ENCODE measurements at regions of chr12 and their contacts with region 1.

Region 1: DNA sequence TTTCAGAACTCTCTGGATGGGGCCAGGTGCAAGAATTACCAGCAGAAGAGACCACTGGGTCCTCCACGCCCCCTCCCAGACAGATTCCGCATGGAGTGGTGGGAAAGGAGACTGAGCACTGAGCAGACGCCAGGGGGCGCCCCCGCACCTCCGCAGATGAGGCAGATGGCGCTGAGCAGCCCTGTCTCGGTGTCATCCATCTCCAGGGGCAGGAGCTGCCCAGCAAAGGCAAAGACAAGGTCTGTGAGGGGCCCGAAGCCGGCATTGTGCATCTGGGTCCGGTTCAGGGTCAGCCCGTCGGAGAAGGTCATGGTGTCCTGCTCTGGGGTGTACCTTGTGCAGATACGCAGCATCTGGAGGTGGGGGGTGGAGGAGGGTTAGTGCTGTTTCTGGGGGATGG is 6.3 kb upstream of the ITGB7 start:
- DNase-seq: peak; percentile 84
- H3K4me3 Mint-ChIP-seq: no peak overlapping the region
- H3K27ac Mint-ChIP-seq: peak overlapping the region; percentile 37
- H3K4me1 Mint-ChIP-seq: peaks cover 93% of the 10 kb centered on the region
- H3K27me3 Mint-ChIP-seq: no peaks in the 10 kb centered on the region

Region 2: GRCh38 chr12:53115112-53115890 is 98.0 kb before region 1 on chr12:
- CTCF ChIA-PET with region 1: no interaction called
- POLR2A ChIA-PET with region 1: no interaction called
- DNase-seq: no peak
- H3K4me3 Mint-ChIP-seq: no peak overlapping the region
- H3K27ac Mint-ChIP-seq: no peak overlapping the region
- H3K4me1 Mint-ChIP-seq: no peaks in the 10 kb centered on the region
- H3K27me3 Mint-ChIP-seq: peaks cover 2% of the 10 kb centered on the region

Region 3: GRCh38 chr12:53180220-53180930 is 33.0 kb before region 1 on chr12 and contains the starts of genes CSAD and ZNF740:
- CTCF ChIA-PET with region 1: interaction called, 71 read pairs
- POLR2A ChIA-PET with region 1: no interaction called
- DNase-seq: peak; percentile 98
- H3K4me3 Mint-ChIP-seq: peak within 1 kb of the TSS; percentile 84
- H3K27ac Mint-ChIP-seq: peak within 1 kb of the TSS; percentile 95
- H3K4me1 Mint-ChIP-seq: peaks cover 60% of the 10 kb centered on the region
- H3K27me3 Mint-ChIP-seq: no peaks in the 10 kb centered on the region
- total RNA-seq, gene CSAD: 33.3 to 34.7 TPM
- total RNA-seq, gene ZNF740: 38.9 to 44.1 TPM

Region 4: GRCh38 chr12:53200458-53201176 is 12.7 kb before region 1 on chr12:
- CTCF ChIA-PET with region 1: interaction called, 27 read pairs
- POLR2A ChIA-PET with region 1: no interaction called
- DNase-seq: peak; percentile 51
- H3K4me3 Mint-ChIP-seq: peak overlapping the region; percentile 70
- H3K27ac Mint-ChIP-seq: peak overlapping the region; percentile 90
- H3K4me1 Mint-ChIP-seq: peaks cover 82% of the 10 kb centered on the region
- H3K27me3 Mint-ChIP-seq: no peaks in the 10 kb centered on the region

Region 5: DNA sequence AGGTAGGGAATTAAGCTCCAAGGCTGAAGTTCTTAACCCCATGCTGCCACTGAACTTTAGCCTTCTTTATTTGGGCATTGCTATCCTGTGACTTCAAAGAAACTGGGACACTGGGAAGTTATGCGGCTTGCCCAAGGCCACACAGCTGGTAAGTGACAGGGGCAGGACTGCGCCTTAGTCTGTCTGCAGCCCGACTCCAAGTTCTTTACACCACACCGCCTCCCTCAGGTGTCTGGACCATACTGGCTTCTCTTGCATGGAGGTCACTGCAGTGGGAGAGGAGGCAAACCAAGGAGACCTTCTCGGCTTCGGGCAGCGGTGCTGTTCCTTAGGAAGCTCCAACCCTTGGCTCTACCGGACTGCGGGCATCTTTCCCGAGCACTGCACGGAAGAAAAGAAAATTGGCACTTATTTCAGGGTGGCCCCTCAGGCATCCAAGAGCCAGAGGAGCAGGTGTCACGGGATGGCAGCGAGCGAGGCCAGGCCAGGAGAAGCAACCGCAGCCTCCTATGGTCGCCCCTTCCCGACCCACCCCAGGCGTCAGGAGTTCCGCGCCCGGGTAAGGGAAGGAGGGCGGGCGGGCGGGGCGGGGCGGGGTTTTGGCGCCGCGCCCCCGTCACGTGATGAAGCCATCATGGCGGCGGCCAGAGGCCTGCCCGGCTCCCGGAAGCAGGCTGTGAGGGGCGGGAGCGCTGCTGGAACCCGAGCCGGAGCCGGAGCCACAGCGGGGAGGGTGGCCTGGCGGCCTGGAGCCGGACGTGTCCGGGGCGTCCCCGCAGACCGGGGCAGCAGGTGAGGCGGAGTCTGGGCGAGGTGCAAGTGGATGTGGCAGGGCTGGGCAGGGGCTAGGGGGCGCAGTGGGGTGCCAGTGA is 38.4 kb after region 1 on chr12:
- CTCF ChIA-PET with region 1: interaction called, 22 read pairs
- POLR2A ChIA-PET with region 1: no interaction called
- DNase-seq: peak; percentile 73
- H3K4me3 Mint-ChIP-seq: peak overlapping the region; percentile 99
- H3K27ac Mint-ChIP-seq: peak overlapping the region; percentile 94
- H3K4me1 Mint-ChIP-seq: peaks cover 47% of the 10 kb centered on the region
- H3K27me3 Mint-ChIP-seq: no peaks in the 10 kb centered on the region

Region 6: GRCh38 chr12:53287741-53288216 is 74.4 kb after region 1 on chr12:
- CTCF ChIA-PET with region 1: interaction called, 10 read pairs
- POLR2A ChIA-PET with region 1: no interaction called
- DNase-seq: peak; percentile 76
- H3K4me3 Mint-ChIP-seq: no peak overlapping the region
- H3K27ac Mint-ChIP-seq: peak overlapping the region; percentile 64
- H3K4me1 Mint-ChIP-seq: peaks cover 9% of the 10 kb centered on the region
- H3K27me3 Mint-ChIP-seq: no peaks in the 10 kb centered on the region